ENCODE measurements at regions of chr12 and their contacts with region 1.

Region 1: GRCh38 chr12:123533672-123534643 is at the start of gene RILPL1:
- DNase-seq: peak; percentile 16 to 70 (median 47)
- ATAC-seq: peak; percentile 86
- H3K4me3 ChIP-seq: peak within 1 kb of the TSS; percentile 65
- H3K4me3 Mint-ChIP-seq: peak within 1 kb of the TSS; percentile 83 to 91 (median 88)
- H3K27ac ChIP-seq: peak within 1 kb of the TSS; percentile 61
- H3K27ac Mint-ChIP-seq: peak within 1 kb of the TSS; percentile 60 to 95 (median 79)
- H3K4me1 ChIP-seq: peaks cover 11 to 18% of the 10 kb centered on the region in 2 donors
- H3K4me1 Mint-ChIP-seq: peaks cover 11 to 25% (median 16%) of the 10 kb centered on the region in 7 donors
- H3K27me3 ChIP-seq: no peaks in the 10 kb centered on the region
- H3K27me3 Mint-ChIP-seq: peaks cover 0 to 22% (median 0%) of the 10 kb centered on the region in 5 donors
- total RNA-seq, gene RILPL1: 1.5 to 9.2 (median 3.9) TPM

Region 2: GRCh38 chr12:123436017-123436964 is 97.7 kb before region 1 on chr12 and contains the start of gene RILPL2:
- CTCF ChIA-PET with region 1: interaction called, 5 read pairs
- POLR2A ChIA-PET with region 1: interaction called, 3 read pairs
- intact Hi-C with region 1: loop called in 1 of 2 experiments (anchors 1 kb)
- DNase-seq: peak; percentile 79 to 96 (median 88)
- ATAC-seq: peak; percentile 91
- H3K4me3 ChIP-seq: peak within 1 kb of the TSS; percentile 96
- H3K4me3 Mint-ChIP-seq: peak within 1 kb of the TSS; percentile 85 to 97 (median 93)
- H3K27ac ChIP-seq: peak within 1 kb of the TSS; percentile 88
- H3K27ac Mint-ChIP-seq: peak within 1 kb of the TSS; percentile 77 to 96 (median 88)
- H3K4me1 ChIP-seq: peaks cover 11 to 29% of the 10 kb centered on the region in 2 donors
- H3K4me1 Mint-ChIP-seq: peaks cover 24 to 47% (median 33%) of the 10 kb centered on the region in 7 donors
- H3K27me3 ChIP-seq: no peaks in the 10 kb centered on the region
- H3K27me3 Mint-ChIP-seq: no peaks in the 10 kb centered on the region
- total RNA-seq, gene RILPL2: 4.3 to 12.8 (median 5.6) TPM

Region 3: DNA sequence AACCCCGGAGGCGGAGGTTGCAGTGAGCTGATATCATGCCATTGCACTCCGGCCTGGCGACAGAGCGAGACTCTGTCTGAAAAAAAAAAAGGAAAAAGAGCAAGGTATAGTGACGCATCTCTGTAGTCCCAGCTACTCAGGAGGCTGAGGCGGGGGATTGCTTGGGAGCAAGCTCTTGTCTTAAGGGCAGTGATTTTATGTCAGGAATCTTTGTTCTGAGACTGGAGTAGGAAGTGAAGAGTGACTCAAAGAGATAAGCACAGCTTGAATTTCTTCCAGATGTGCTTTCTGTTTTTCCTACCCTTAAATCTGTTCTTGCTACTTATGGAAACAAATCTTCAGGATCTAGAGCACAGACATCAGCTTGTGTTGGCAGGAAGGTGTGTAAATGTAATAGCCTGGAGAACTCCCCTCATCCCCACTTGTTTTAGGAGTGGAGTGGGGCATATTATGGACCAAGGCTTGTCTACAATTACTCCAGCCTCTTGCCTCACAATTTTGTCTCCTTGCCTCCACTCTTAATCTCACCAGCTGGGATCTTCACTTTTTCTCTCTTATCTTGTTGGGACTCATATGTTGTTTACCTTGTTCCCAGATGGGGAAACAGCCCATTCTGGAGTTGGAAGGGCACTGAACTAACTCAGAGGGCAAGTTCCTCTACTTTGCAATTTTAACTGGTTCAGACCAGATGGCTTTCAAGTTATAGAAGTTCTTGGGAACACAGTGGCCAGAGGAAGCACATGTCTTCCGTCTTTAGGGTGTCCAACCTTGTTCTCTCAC is 57.9 kb after region 1 on chr12:
- CTCF ChIA-PET with region 1: no interaction called
- POLR2A ChIA-PET with region 1: no interaction called
- intact Hi-C with region 1: no loop called
- DNase-seq: no peak
- ATAC-seq: no peak
- H3K4me3 ChIP-seq: no peak overlapping the region
- H3K4me3 Mint-ChIP-seq: no peak overlapping the region
- H3K27ac ChIP-seq: no peak overlapping the region
- H3K27ac Mint-ChIP-seq: peak overlapping the region in 8 of 9 donors; percentile 17 to 81 (median 52)
- H3K4me1 ChIP-seq: peaks cover 10 to 11% of the 10 kb centered on the region in 2 donors
- H3K4me1 Mint-ChIP-seq: peaks cover 25 to 47% (median 40%) of the 10 kb centered on the region in 7 donors
- H3K27me3 ChIP-seq: no peaks in the 10 kb centered on the region
- H3K27me3 Mint-ChIP-seq: no peaks in the 10 kb centered on the region

Region 4: GRCh38 chr12:123948796-123949769 is 415.1 kb after region 1 on chr12:
- CTCF ChIA-PET with region 1: no interaction called
- POLR2A ChIA-PET with region 1: no interaction called
- intact Hi-C with region 1: no loop called
- DNase-seq: no peak
- ATAC-seq: no peak
- H3K4me3 ChIP-seq: no peak overlapping the region
- H3K4me3 Mint-ChIP-seq: no peak overlapping the region
- H3K27ac ChIP-seq: no peak overlapping the region
- H3K27ac Mint-ChIP-seq: peak overlapping the region in 1 of 9 donors; percentile 70
- H3K4me1 ChIP-seq: no peaks in the 10 kb centered on the region
- H3K4me1 Mint-ChIP-seq: peaks cover 0 to 12% (median 5%) of the 10 kb centered on the region in 7 donors
- H3K27me3 ChIP-seq: no peaks in the 10 kb centered on the region
- H3K27me3 Mint-ChIP-seq: no peaks in the 10 kb centered on the region